ENCODE measurements at regions of chr17 and their contacts with region 1.

Region 1: GRCh38 chr17:1516388-1517161 is at the start of gene INPP5K:
- DNase-seq: peak; percentile 97 to 99
- H3K4me3 ChIP-seq: peak within 1 kb of the TSS; percentile 69 to 91
- H3K27ac ChIP-seq: peak within 1 kb of the TSS; percentile 87 to 92
- H3K4me1 ChIP-seq: peaks cover 0 to 48% (median 35%) of the 10 kb centered on the region in 4 donors
- H3K27me3 ChIP-seq: no peaks in the 10 kb centered on the region
- CTCF ChIP-seq: no peak

Region 2: GRCh38 chr17:1275962-1276736 is 240.4 kb before region 1 on chr17:
- intact Hi-C with region 1: loop called (anchors 5 kb)
- DNase-seq: peak; percentile 56 to 75
- H3K4me3 ChIP-seq: no peak overlapping the region
- H3K27ac ChIP-seq: no peak overlapping the region
- H3K4me1 ChIP-seq: peaks cover 0 to 32% (median 12%) of the 10 kb centered on the region in 4 donors
- H3K27me3 ChIP-seq: peaks cover 1 to 16% of the 10 kb centered on the region in 2 donors
- CTCF ChIP-seq: peak; percentile 83 to 89

Region 3: GRCh38 chr17:1365445-1366039 is 151.0 kb before region 1 on chr17:
- intact Hi-C with region 1: loop called (anchors 1 kb)
- DNase-seq: peak; percentile 33 to 76
- H3K4me3 ChIP-seq: no peak overlapping the region
- H3K27ac ChIP-seq: peak overlapping the region; percentile 33 to 61
- H3K4me1 ChIP-seq: peaks cover 0 to 96% (median 53%) of the 10 kb centered on the region in 4 donors
- H3K27me3 ChIP-seq: no peaks in the 10 kb centered on the region
- CTCF ChIP-seq: peak; percentile 72 to 85

Region 4: GRCh38 chr17:1455797-1456599 is 60.6 kb before region 1 on chr17 and contains the start of gene CRK:
- intact Hi-C with region 1: loop called (anchors 5 kb)
- DNase-seq: peak; percentile 94 to 98
- H3K4me3 ChIP-seq: peak within 1 kb of the TSS; percentile 92 to 93
- H3K27ac ChIP-seq: peak within 1 kb of the TSS; percentile 93 to 96
- H3K4me1 ChIP-seq: peaks cover 0 to 65% (median 49%) of the 10 kb centered on the region in 4 donors
- H3K27me3 ChIP-seq: no peaks in the 10 kb centered on the region
- CTCF ChIP-seq: peak in 1 of 2 experiments; percentile 29

Region 5: DNA sequence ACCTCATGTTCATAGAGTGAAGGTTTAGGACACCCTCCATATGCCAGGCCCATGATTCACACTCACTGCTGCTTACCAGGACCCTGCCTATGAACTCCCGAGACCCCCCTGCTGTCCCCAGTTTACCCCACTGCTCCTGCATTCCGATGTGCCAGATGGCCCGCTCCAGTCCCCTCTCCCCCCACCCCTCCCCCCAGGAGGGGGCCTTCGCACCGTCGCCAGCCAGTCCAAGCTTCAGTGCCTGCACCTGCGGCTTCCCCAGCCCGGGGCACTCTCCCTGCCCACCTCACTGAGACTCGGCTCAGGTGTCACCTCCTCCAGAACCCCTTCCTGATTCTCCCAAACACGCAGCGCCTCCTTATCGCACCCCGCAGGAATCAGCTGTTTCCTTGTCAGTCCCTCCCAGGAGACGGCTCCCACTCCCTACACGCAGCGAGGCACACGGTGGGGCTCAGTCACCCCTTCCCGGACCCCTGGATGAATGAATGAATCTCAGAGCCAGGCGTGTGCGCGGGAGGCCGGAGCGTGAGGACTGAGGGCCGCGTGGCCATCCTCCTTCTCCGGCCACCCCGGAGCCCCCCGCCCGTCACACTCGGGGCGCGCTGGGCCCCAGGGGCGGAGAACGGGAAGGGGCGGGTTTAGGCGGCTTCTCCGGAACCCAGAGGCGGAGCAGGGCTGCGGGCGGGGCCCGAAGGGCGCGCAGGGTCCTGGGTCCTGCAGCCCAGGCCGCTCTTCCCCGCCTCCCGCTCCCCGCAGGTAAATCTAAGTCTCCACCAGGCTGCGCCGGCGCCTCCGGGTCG is 25.7 kb before region 1 on chr17:
- intact Hi-C with region 1: loop called (anchors 1 kb)
- DNase-seq: peak; percentile 48 to 82
- H3K4me3 ChIP-seq: peak overlapping the region; percentile 69 to 73
- H3K27ac ChIP-seq: peak overlapping the region; percentile 99
- H3K4me1 ChIP-seq: peaks cover 5 to 89% (median 82%) of the 10 kb centered on the region in 4 donors
- H3K27me3 ChIP-seq: no peaks in the 10 kb centered on the region
- CTCF ChIP-seq: no peak